Astrocyte of the cerebellum (primary cell): ENCODE measurements at regions of chr12 and their contacts with region 1.

Region 1: GRCh38 chr12:117857632-117858612 is 110.9 kb downstream of the KSR2 start:
- DNase-seq: no peak
- H3K4me3 ChIP-seq: no peak overlapping the region
- CTCF ChIP-seq: peak; percentile 59

Region 2: DNA sequence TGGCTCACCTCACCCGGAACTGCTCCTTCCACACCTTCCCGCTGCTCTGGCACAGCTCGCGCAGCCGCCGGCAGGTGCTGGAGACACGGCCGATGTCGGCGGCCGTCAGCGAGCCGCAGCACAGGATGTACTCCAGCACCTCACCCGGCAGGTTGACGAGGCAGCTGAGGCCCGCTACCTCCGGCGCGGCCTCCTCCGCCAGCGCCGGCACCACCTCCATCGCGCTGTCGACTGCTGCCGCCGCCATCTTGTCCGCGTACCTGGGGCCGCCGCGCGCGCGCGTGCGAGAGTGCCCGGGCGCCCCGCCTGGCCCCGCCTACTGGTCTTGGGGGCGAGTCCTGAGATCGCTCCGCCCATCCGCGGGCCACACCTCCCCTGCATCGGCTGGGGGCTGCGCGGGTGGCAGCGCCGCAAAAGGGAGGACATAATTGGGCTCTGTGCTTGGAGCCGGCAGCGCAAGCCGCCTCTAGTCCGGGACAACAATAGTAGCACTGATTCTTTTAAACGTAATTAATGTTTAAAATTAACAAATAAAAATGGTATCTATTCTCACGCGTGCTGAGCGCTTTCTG is 667.6 kb before region 1 on chr12 and contains the start of gene FBXO21:
- in situ Hi-C with region 1: loop called (anchors 10 kb)
- DNase-seq: peak; percentile 55
- H3K4me3 ChIP-seq: peak within 1 kb of the TSS; percentile 71
- CTCF ChIP-seq: no peak

Region 3: DNA sequence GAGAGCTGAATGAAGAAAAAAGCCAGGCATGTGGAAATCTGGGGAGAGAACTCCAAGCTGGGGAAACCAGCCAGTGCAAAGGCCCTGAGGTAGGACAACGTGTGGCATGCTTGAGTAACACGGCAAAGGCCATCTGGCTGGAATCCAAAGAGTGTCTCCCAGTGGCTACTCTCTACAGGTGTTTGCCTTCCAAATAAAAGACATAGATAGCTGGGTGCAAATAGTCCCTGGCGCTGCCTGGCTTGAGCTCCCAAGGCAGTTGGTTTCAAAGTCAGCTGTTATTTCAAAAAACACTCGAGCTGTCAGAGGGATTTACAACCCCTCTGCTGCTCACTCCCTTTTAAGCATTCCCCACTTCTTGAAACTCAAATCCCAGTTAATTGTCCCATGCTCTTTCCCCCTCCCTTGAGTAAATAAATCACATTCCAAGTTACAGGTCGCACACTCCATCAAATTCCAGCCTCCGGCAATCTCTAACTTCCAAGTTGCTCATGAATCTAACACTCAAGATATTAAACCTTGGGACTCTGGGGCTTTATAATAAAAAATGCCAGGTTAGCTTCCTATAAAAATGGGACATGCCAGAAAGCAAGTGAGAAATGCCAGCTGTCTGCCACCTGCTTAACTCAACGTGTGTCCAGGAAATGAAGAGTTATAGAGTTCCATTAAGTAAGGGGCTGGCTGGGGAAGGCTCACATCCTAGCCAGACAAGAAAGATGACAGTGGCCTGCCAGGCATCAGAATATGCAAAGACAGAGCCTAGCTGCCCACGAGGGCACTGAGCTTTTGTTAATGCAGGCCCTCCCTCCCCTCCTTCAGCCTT is 362.9 kb before region 1 on chr12:
- in situ Hi-C with region 1: no loop called
- DNase-seq: no peak
- H3K4me3 ChIP-seq: no peak overlapping the region
- CTCF ChIP-seq: no peak